AG04449 (cell line): ENCODE measurements at regions of chr3 and their contacts with region 1.

Region 1: GRCh38 chr3:128794770-128795649 is 69.0 kb downstream of the RAB7A start:
- DNase-seq: no peak
- H3K4me3 ChIP-seq: no peak overlapping the region; the same call in 1 of the 2 replicates
- CTCF ChIP-seq: peak; percentile 69

Region 2: GRCh38 chr3:128617557-128618397 is 177.2 kb before region 1 on chr3:
- CTCF ChIA-PET with region 1: interaction called, 13 read pairs
- POLR2A ChIA-PET with region 1: interaction called, 3 read pairs
- DNase-seq: peak; percentile 65
- H3K4me3 ChIP-seq: peak overlapping the region; percentile 85
- CTCF ChIP-seq: peak; percentile 92

Region 3: GRCh38 chr3:128767094-128767750 is 27.8 kb before region 1 on chr3:
- CTCF ChIA-PET with region 1: interaction called, 21 read pairs
- POLR2A ChIA-PET with region 1: no interaction called
- DNase-seq: no peak
- H3K4me3 ChIP-seq: no peak overlapping the region
- CTCF ChIP-seq: no peak

Region 4: DNA sequence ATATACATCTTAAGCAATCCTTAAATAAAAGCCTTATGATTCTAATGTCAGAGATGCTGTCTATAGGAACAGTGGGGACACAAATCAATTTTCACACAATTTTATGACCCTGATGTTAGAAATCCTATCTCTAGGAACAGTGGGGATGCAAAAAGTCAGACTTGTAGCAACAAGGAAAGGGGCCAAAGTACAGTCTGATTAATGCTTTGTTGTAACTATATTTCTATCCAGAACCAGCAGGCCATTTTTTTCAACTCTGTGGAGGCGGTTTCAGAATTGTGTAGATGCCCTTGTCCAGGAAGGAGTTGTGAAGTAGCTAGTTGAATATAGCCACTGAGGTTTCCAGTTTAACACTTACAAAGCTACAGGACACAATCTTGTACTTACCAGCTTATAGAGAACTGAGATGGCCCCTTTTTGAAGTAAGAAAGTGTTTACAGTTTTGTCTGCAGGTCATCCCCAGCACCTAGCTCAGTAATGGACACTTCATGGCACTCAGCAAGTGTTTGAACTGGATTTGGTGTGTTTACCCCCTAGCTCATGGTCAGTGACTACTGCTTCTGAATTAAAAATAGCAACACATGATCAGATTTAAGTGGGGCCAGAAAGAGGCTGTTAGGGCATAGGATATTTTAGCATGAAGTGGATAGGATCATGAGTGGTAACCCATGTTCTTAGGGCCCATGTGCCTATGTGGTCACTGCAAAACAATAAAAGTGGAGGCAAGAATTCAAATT is 14.7 kb before region 1 on chr3:
- CTCF ChIA-PET with region 1: interaction called, 24 read pairs
- POLR2A ChIA-PET with region 1: no interaction called
- DNase-seq: no peak
- H3K4me3 ChIP-seq: no peak overlapping the region
- CTCF ChIP-seq: no peak

Region 5: DNA sequence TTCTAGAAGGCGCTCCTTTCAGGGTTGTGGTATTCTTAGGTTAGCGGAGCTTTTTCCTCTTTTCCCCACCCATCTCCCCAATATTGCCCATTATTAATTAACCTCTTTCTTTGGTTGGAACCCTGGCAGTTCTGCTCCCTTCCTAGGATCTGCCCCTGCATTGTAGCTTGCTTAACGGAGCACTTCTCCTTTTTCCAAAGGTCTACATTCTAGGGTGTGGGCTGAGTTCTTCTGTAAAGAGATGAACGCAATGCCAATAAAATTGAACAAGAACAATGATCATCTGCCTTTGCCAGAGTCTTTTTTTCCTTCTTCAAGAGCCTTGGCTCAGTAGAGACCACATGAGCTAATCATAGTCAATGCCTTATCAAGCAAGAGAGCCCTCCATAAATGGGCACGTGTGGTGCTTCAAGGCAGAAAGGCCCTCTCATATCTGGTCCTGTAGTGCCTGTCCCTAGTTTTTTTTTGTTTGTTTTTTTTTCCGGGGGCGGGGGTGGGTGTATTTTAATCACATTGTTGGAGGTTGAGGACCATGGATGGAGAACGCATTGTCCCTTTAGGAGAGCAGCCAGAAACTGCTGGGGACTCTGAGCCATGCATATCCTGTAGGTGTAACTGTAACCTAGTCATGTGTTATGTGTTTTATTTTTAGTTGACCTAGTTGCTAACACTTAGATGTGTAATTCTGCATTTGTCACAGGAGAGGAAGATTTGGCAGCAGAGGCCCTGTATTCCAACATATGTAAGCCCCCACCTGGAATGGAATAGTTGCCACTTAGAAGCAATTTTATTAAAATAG is 19.7 kb after region 1 on chr3:
- CTCF ChIA-PET with region 1: interaction called, 25 read pairs
- POLR2A ChIA-PET with region 1: no interaction called
- DNase-seq: no peak
- H3K4me3 ChIP-seq: no peak overlapping the region
- CTCF ChIP-seq: no peak

Region 6: DNA sequence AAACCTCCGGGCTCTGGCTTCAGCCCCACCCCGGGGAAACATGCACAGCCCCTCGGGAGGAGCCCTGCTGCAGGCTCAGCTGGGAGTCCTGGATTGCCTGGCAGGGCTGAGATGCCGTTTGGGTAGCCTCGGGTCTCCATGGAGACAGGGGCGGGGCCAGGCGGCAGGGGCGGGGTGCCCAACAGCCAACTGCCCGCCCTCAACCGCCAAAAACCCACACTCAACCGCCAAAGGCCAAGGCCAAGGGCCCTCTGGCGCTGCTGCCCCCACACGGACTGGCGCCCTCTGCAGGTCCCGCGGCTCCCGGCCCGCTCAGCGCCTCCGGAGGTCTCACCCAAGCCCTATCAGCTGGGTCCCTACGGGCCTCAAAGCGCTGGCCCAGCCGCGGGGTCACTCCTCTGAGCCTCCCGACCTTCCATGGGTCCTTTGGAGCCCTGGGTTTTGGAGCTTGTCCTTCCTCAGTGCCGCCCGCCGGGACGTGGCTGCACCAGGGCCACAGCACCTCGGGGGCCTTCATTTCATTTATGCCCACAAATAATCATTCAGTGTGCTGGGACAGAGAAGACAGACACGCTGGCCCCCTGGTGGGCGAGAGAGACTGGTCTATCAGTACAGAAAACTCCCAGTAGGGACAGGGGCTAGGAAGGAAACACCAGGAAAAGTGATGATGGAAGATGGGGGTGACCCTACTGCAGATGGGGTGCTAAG is 50.9 kb after region 1 on chr3:
- CTCF ChIA-PET with region 1: interaction called, 11 read pairs
- POLR2A ChIA-PET with region 1: no interaction called
- DNase-seq: no peak
- H3K4me3 ChIP-seq: peak overlapping the region; percentile 48
- CTCF ChIP-seq: peak; percentile 66